ENCODE measurements at regions of chr15 and their contacts with region 1.

Region 1: DNA sequence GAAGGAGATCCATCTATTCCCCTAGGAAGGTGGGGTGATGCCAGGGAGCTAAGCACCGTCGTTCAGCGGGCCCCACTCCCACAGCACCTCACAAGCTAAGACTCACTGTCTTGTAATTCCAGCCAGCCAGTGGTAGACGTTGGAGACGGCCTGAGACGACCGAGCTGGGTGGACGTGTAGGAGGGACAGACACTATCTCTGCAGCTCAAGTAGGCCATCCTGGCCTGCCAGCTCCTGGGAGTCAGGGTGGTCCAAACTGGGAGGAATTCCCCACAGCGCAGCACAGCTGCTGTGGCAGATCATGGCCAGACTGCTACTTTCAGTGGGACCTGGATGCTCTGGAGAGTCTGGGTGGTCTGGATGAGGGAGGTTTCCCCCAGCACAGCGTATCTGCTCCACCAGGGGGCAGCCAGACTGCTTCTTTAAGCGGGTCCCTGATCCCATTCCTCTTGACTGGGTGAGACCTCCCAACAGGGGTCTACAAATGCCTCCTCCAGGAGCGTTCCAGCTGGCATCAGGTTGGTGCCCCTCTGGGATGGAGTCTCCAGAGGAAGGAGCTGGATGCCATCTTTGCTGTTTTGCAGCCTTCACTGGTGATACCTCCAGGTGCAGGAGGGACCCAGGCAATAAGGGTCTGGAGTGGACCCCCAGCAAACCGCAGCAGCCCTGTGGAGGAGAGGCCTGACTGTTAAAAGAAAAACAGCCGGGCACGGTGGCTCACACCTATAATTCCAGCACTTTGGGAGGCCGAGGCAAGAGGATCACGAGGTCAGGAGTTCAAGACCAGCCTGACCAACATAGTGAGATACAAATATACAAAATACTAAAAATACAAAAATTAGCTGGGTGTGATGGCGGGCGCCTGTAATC is 27.6 kb downstream of the GNB5 start:
- DNase-seq: peak; percentile 52
- ATAC-seq: peak; percentile 61
- H3K4me3 Mint-ChIP-seq: no peak overlapping the region
- H3K27ac Mint-ChIP-seq: no peak overlapping the region
- H3K4me1 Mint-ChIP-seq: peaks cover 28% of the 10 kb centered on the region
- H3K27me3 Mint-ChIP-seq: no peaks in the 10 kb centered on the region
- CTCF ChIP-seq: no peak

Region 2: GRCh38 chr15:52179278-52180195 is 16.0 kb after region 1 on chr15:
- CTCF ChIA-PET with region 1: interaction called, 21 read pairs
- POLR2A ChIA-PET with region 1: interaction called, 9 read pairs
- intact Hi-C with region 1: no loop called
- DNase-seq: peak; percentile 91
- ATAC-seq: peak; percentile 90
- H3K4me3 Mint-ChIP-seq: peak overlapping the region; percentile 78
- H3K27ac Mint-ChIP-seq: peak overlapping the region; percentile 94
- H3K4me1 Mint-ChIP-seq: peaks cover 20% of the 10 kb centered on the region
- H3K27me3 Mint-ChIP-seq: no peaks in the 10 kb centered on the region
- CTCF ChIP-seq: peak; percentile 31

Region 3: GRCh38 chr15:52217186-52217585 is 53.6 kb after region 1 on chr15:
- CTCF ChIA-PET with region 1: interaction called, 11 read pairs
- POLR2A ChIA-PET with region 1: no interaction called
- intact Hi-C with region 1: no loop called
- DNase-seq: peak; percentile 37
- ATAC-seq: no peak
- H3K4me3 Mint-ChIP-seq: no peak overlapping the region
- H3K27ac Mint-ChIP-seq: no peak overlapping the region
- H3K4me1 Mint-ChIP-seq: peaks cover 14% of the 10 kb centered on the region
- H3K27me3 Mint-ChIP-seq: no peaks in the 10 kb centered on the region
- CTCF ChIP-seq: no peak

Measured in activated CD8-positive, alpha-beta T cell treated with anti-CD3 and anti-CD28 coated beads for 36 hours (primary cell).